ENCODE measurements at regions of chr16 and their contacts with region 1.

Region 1: GRCh38 chr16:72093448-72094265 is at the starts of genes DHX38 and TXNL4B:
- DNase-seq: peak; percentile 97
- total RNA-seq, gene DHX38: 41.2 TPM
- total RNA-seq, gene TXNL4B: 5.8 TPM

Region 2: DNA sequence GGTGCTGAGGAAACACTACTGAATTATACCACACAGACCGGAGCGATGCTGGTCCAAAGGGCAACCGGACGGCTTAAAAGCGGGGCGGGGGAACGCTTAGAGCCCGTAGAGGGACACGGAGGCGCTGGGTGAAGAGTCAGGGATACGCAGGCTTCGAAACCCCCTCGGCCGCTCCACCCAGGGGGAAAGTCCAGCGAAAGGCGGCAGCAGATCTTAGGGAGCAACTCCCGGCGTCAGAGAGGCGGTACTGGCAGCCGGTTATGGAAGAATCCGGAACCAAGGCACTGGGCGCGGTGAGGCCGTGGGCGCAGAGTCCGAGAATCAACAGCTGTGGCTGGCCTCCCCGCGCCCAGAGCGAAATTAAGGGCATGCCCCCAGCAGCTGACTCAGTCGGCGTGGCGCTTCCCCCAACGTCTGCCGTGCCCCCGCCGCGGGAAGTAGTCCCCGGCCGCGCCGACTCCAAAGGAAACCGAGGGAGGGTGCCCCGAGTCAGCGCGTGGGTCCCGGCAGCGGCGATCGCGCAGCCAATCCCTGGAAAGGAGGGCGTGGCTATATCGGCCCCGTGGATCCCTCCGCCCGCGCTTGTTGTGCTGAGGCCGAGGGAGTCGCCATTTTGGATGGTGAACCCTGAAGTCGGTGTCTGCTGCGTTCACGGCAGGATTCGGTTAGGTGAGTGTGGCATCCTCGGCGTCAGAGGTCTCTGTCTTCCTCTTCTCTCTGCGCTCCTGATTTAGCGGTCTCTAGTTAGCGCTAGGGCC is 198.6 kb before region 1 on chr16 and contains the start of gene IST1:
- intact Hi-C with region 1: loop called (anchors 10 kb)
- DNase-seq: peak; percentile 99
- total RNA-seq, gene IST1: 111 TPM

Region 3: DNA sequence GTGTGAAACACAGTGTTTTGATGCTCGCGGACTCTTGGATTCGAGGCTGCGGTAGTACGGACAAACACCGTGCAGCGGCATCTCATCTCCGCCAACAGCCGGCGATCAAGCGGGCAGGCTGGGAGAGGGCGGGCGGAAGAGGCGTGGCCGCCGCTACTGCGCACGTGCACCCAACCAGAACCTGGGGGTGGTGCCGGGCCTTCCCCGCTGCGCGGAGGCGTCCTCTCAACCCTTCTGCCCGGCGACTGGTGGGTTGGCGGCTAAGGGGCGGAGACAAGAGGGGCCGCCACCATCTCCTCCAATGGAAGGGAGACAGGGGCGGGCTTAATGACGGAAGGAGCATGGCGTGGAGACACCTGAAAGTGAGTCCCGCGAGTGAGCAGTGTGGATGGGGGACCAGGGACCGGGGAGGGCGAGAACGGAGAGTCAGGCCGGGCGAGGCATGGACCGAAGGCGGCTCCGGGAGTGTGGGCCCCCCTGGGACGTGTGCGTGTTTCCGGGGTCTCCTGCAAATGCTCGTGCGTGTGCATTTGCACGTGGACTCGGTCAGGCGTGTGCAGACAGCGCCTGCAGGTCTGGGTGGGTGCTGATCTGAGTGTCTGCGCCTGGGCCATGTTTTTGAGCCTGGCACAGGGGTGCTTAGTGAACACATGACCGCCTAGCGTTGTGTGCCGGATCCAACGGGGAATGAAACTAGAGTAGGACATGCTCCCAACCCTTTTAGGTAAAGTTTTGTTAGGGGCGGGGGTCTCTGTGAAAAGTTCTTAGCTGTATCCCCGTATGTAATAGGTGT is 85.0 kb before region 1 on chr16 and contains the start of gene DHODH:
- intact Hi-C with region 1: loop called (anchors 2 kb)
- DNase-seq: peak; percentile 99
- total RNA-seq, gene DHODH: 7.3 TPM

Measured in cardiac septum (tissue), 1 donor.